ENCODE measurements at regions of chr7 and their contacts with region 1.

Region 1: DNA sequence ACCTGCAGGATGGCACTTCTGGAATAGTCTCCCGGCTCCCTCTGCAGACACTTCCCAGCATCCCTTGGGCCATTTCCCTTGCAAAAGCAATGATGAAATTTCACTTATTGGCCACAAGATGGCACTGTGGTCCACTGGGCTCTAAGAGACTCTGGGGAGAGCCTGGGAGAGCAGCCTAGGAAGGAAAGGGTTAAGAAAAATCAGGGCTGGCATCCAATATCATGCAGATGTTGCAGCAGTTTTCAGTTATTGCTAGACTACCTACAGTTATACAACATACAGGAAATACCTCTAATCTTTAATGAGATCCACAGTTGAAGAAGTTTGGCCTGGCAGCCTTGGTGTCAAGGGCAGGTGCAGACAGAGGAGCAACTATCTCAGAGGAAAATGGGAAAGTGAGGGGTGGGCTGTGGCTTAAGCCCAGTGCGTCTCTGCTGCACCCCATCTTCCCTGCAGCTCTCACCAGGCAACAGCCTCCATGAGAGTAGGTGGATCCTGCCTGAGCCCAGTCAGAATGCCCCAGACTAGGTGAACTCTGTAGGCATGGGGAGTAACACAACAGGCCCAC is 100.2 kb upstream of the PRSS58 start:
- DNase-seq: peak in 4 of 9 experiments; percentile 19 to 69 (median 40)
- ATAC-seq: peak; percentile 54
- H3K4me3 ChIP-seq: no peak overlapping the region
- H3K4me3 Mint-ChIP-seq: no peak overlapping the region
- H3K27ac ChIP-seq: no peak overlapping the region
- H3K27ac Mint-ChIP-seq: no peak overlapping the region
- H3K4me1 ChIP-seq: peaks cover 33% of the 10 kb centered on the region
- H3K4me1 Mint-ChIP-seq: peaks cover 35% of the 10 kb centered on the region
- H3K27me3 ChIP-seq: no peaks in the 10 kb centered on the region
- H3K27me3 Mint-ChIP-seq: peaks cover 1% of the 10 kb centered on the region
- CTCF ChIP-seq: peak; percentile 77

Region 2: DNA sequence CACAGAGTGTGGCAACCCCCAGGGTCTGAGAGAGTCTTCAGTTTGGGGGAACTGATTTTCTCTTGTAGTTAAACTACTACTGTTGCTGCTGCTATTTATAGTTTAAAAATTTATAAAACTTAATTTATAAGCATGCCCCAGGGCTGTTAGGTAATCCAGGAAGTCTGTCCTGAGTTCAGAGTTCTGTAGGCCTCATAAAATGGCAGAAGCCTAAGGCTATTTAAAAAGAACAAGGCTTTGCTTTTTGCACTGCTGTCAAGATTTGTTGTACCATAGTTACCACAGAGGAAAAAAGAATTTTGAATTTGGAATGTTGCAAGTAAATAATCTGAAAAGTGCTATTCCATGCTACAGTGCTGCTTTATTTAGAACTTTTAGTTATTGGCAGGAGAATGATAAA is 740.8 kb before region 1 on chr7:
- CTCF ChIA-PET with region 1: no interaction called
- POLR2A ChIA-PET with region 1: no interaction called
- intact Hi-C with region 1: no loop called
- DNase-seq: no peak
- ATAC-seq: no peak
- H3K4me3 ChIP-seq: no peak overlapping the region
- H3K4me3 Mint-ChIP-seq: no peak overlapping the region
- H3K27ac ChIP-seq: no peak overlapping the region
- H3K27ac Mint-ChIP-seq: no peak overlapping the region
- H3K4me1 ChIP-seq: no peaks in the 10 kb centered on the region
- H3K4me1 Mint-ChIP-seq: no peaks in the 10 kb centered on the region
- H3K27me3 ChIP-seq: no peaks in the 10 kb centered on the region
- H3K27me3 Mint-ChIP-seq: no peaks in the 10 kb centered on the region
- CTCF ChIP-seq: no peak

Region 3: DNA sequence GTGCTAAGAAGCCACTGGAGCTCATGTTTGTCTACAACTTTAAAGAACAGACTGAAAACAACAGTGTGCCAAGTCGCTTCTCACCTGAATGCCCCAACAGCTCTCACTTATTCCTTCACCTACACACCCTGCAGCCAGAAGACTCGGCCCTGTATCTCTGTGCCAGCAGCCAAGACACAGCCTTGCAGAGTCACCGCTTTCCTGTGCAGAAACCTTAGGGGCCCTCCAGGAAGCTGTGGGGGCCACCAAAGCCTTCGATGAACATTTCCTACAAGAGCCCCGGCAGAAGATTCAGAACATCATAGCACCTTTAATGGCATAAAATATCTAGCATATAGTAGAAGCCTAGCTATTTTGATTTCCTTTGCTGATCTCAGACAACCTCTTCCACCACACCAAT is 12.2 kb before region 1 on chr7:
- CTCF ChIA-PET with region 1: interaction called, 13 read pairs
- POLR2A ChIA-PET with region 1: no interaction called
- intact Hi-C with region 1: no loop called
- DNase-seq: peak in 5 of 9 experiments; percentile 33 to 70 (median 51)
- ATAC-seq: peak; percentile 90
- H3K4me3 ChIP-seq: no peak overlapping the region
- H3K4me3 Mint-ChIP-seq: peak overlapping the region; percentile 38
- H3K27ac ChIP-seq: peak overlapping the region; percentile 11 to 17
- H3K27ac Mint-ChIP-seq: peak overlapping the region; percentile 66
- H3K4me1 ChIP-seq: peaks cover 17% of the 10 kb centered on the region
- H3K4me1 Mint-ChIP-seq: peaks cover 35% of the 10 kb centered on the region
- H3K27me3 ChIP-seq: no peaks in the 10 kb centered on the region
- H3K27me3 Mint-ChIP-seq: no peaks in the 10 kb centered on the region
- CTCF ChIP-seq: no peak

Region 4: GRCh38 chr7:142385491-142386340 is 27.7 kb after region 1 on chr7:
- CTCF ChIA-PET with region 1: interaction called, 39 read pairs
- POLR2A ChIA-PET with region 1: no interaction called
- intact Hi-C with region 1: no loop called
- DNase-seq: peak in 5 of 9 experiments; percentile 23 to 64 (median 52)
- ATAC-seq: peak; percentile 62
- H3K4me3 ChIP-seq: no peak overlapping the region
- H3K4me3 Mint-ChIP-seq: no peak overlapping the region
- H3K27ac ChIP-seq: no peak overlapping the region
- H3K27ac Mint-ChIP-seq: no peak overlapping the region
- H3K4me1 ChIP-seq: peaks cover 18% of the 10 kb centered on the region
- H3K4me1 Mint-ChIP-seq: peaks cover 26% of the 10 kb centered on the region
- H3K27me3 ChIP-seq: no peaks in the 10 kb centered on the region
- H3K27me3 Mint-ChIP-seq: no peaks in the 10 kb centered on the region
- CTCF ChIP-seq: peak; percentile 43